ENCODE measurements at regions of chr4 and their contacts with region 1.

Region 1: GRCh38 chr4:16205298-16206164 is 20.7 kb downstream of the TAPT1 start:
- DNase-seq: peak; percentile 86
- H3K4me3 ChIP-seq: peak overlapping the region; percentile 18
- H3K27ac ChIP-seq: peak overlapping the region; percentile 39
- H3K4me1 ChIP-seq: peaks cover 21% of the 10 kb centered on the region
- CTCF ChIP-seq: peak; percentile 84

Region 2: GRCh38 chr4:15729910-15730533 is 475.5 kb before region 1 on chr4:
- CTCF ChIA-PET with region 1: no interaction called
- POLR2A ChIA-PET with region 1: no interaction called
- intact Hi-C with region 1: no loop called
- DNase-seq: peak; percentile 78
- H3K4me3 ChIP-seq: no peak overlapping the region
- H3K27ac ChIP-seq: no peak overlapping the region
- H3K4me1 ChIP-seq: peaks cover 42% of the 10 kb centered on the region
- CTCF ChIP-seq: peak; percentile 99

Region 3: DNA sequence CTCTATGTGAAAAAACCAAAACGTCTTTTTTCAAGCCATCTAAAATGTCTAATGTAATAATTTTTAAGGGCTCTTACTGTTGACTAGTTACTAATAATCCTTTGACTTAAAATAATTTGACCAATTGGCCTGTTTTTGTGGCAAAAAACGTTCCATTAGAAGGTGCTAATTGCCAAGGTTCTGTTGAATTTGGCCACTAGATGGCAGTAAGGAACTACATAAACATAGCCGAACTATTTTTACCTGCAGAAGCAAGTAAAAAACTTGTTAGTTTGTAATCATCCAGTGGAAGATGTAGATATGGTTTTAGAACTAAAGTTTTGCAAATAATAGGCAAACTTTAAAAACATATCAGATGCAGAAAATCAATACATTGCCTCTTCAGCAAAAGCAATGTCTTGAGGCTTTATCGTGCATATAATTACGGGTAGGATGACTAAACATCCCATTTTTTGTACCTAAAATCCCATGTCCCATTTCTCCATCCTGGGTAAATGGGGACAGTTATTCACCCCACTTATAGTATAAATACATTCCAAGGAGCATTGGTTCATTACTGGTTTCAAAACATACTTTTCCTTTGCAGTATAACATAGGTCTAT is 179.3 kb before region 1 on chr4:
- CTCF ChIA-PET with region 1: interaction called, 4 read pairs
- POLR2A ChIA-PET with region 1: no interaction called
- intact Hi-C with region 1: loop called (anchors 2 kb)
- DNase-seq: peak; percentile 80
- H3K4me3 ChIP-seq: no peak overlapping the region
- H3K27ac ChIP-seq: no peak overlapping the region
- H3K4me1 ChIP-seq: no peaks in the 10 kb centered on the region
- CTCF ChIP-seq: peak; percentile 99

Region 4: DNA sequence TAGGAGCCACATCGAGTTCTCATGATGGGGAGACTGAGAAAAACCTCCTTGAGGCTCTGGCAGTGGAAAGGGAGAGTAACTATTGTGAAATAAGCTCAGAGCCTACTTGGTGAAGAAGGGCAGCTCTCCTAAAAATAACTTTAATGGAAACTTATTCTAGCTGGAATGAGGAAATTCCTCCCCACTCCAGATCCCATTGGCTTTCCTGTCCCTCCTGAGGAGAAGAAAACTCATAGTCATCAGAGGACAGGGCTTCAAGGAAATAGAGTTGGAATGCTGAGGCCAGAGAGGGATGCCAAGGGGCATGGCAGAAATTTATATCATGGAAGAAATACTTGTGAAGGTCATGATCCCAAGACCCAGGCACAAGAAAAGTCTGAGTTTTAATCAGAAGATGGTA is 91.5 kb after region 1 on chr4:
- CTCF ChIA-PET with region 1: no interaction called
- POLR2A ChIA-PET with region 1: no interaction called
- intact Hi-C with region 1: no loop called
- DNase-seq: no peak
- H3K4me3 ChIP-seq: no peak overlapping the region
- H3K27ac ChIP-seq: no peak overlapping the region
- H3K4me1 ChIP-seq: no peaks in the 10 kb centered on the region
- CTCF ChIP-seq: no peak